ENCODE measurements at regions of chr16 and their contacts with region 1.

Region 1: DNA sequence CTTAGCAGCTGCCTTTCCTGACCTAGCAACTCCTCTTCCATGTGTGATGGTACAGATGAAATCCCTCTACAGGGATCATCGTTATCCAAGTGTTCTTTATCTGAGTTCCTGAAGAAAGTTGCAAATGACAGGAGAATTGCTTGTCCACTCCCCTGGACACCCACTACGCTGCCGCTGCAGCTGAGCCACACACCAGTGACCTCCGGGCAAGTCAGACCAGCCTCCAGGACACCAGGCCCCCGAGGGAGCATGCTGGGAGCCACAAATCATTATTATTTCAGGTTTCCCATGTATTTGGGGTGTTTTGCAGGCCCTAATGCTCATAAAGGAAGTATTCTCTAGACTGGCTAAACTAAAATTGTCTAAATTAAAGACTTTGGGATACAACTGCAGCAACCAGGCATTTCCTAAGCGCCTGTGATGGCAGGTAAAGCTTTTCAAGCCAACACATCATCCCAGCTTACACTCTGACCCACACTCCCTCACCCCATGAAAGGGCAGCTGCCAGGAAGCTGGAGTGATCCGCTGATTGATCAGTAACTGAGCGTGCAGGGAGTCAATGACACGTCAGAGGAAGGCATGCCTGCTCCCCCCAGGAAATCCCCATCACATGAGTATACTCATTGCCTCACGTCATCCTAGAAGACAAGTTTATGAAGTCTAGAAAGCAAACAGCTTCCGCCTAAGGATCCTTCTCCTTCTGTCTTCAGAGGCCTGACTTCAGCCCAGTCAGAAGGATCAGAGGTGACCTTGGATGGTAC is 14.4 kb downstream of the FA2H start:
- DNase-seq: peak; percentile 11
- H3K4me3 ChIP-seq: no peak overlapping the region
- H3K27ac ChIP-seq: no peak overlapping the region
- H3K4me1 ChIP-seq: no peaks in the 10 kb centered on the region
- H3K27me3 ChIP-seq: no peaks in the 10 kb centered on the region
- CTCF ChIP-seq: no peak

Region 2: DNA sequence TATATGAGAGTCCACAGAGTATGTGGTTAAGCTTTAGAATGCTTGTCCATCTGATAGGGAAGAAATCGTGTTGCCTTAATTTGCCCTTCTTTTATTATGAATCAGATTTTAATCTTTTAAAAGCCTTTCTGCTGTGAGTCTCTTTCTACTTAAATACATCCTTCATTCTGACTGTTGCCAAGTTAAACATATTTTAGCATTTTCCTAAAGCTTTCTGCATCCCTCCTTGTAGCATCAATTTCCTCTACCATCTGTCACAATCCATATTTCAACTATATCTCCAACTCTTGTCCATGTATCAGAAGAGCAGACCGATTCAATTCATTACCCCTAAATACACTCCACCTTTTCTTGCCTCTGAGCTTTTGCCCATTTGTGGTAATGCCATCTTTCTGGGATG is 34.9 kb after region 1 on chr16:
- CTCF ChIA-PET with region 1: no interaction called
- dilution Hi-C with region 1: no loop called
- in situ Hi-C with region 1: no loop called
- intact Hi-C with region 1: no loop called
- DNase-seq: no peak
- H3K4me3 ChIP-seq: no peak overlapping the region
- H3K27ac ChIP-seq: no peak overlapping the region
- H3K4me1 ChIP-seq: no peaks in the 10 kb centered on the region
- H3K27me3 ChIP-seq: no peaks in the 10 kb centered on the region
- CTCF ChIP-seq: no peak

Region 3: DNA sequence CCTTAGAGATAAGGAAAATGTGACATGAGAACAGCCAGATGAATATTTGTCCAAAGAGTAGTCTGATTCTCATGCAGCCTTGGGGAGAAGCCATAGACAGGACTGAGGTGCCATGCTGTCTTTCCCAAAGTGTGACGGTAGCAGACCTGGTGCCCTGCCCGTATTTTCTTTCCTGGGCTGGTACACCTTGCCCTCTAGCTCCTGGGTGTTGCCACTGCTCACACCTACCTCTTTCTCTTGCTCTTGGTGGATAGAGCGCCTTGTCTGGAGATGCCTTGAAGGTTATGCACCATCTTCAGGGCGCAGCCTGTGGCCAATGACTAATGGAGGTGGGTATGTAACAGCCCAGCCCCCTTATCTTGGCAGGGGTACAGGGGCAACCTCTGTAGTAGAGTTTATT is 60.8 kb after region 1 on chr16:
- CTCF ChIA-PET with region 1: no interaction called
- dilution Hi-C with region 1: loop called (anchors 5 kb)
- in situ Hi-C with region 1: no loop called
- intact Hi-C with region 1: no loop called
- DNase-seq: no peak
- H3K4me3 ChIP-seq: no peak overlapping the region
- H3K27ac ChIP-seq: no peak overlapping the region
- H3K4me1 ChIP-seq: no peaks in the 10 kb centered on the region
- H3K27me3 ChIP-seq: no peaks in the 10 kb centered on the region
- CTCF ChIP-seq: no peak